ENCODE measurements at regions of chr7 and their contacts with region 1.

Region 1: GRCh38 chr7:137898839-137899721 is 52.3 kb upstream of the DGKI start:
- DNase-seq: peak; percentile 93

Region 2: GRCh38 chr7:137656227-137656849 is 242.7 kb before region 1 on chr7:
- intact Hi-C with region 1: loop called (anchors 5 kb)
- DNase-seq: peak; percentile 94

Region 3: GRCh38 chr7:137820677-137821420 is 78.2 kb before region 1 on chr7:
- intact Hi-C with region 1: loop called in 1 of 2 experiments (anchors 5 kb)
- DNase-seq: peak; percentile 92

Region 4: GRCh38 chr7:137846827-137847567 is 52.1 kb before region 1 on chr7 and contains the start of gene DGKI:
- intact Hi-C with region 1: loop called in 1 of 2 experiments (anchors 10 kb)
- DNase-seq: peak; percentile 81
- total RNA-seq, gene DGKI: 2.4 to 6.1 TPM

Region 5: DNA sequence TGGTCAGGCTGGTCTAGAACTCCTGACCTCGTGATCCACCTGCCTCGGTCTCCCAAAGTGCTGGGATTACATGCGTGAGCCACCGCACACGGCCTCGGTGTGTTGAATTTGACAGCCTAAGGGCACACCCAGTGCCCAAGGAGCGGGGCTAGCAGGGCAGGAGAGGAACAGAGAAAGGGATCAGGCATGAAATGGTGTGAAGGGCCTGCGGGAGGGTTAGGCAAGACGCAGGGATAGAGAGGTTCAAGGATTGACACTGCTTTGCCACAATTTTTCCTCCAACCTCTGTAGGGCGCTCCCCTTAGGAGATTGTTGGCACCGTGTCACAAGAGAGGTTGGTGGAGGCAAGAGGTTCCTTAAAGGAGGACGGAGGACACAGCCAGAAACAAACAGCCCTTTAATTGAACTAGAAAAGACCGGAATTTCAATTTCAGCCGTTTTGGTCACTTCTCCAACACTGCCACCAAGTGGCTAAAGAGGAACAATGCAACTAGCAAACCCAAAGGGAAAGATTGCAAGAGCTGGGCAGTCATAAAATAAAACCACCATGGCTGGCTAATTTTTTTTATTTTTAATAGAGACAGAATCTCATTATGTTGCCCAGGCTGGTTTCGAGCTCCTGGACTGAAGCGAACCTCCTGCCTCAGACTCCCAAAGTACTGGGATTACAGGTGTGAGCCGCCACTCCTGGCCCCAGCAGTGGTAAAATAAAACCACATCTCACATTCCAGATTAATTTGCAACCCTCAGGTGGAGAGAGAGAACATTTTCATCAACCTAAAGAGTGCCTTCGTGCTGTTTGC is 109.7 kb after region 1 on chr7:
- intact Hi-C with region 1: loop called in 1 of 2 experiments (anchors 2 kb)
- DNase-seq: no peak

Measured in posterior vena cava (tissue), 2 donors.